ENCODE measurements at regions of chr21 and their contacts with region 1.

Region 1: DNA sequence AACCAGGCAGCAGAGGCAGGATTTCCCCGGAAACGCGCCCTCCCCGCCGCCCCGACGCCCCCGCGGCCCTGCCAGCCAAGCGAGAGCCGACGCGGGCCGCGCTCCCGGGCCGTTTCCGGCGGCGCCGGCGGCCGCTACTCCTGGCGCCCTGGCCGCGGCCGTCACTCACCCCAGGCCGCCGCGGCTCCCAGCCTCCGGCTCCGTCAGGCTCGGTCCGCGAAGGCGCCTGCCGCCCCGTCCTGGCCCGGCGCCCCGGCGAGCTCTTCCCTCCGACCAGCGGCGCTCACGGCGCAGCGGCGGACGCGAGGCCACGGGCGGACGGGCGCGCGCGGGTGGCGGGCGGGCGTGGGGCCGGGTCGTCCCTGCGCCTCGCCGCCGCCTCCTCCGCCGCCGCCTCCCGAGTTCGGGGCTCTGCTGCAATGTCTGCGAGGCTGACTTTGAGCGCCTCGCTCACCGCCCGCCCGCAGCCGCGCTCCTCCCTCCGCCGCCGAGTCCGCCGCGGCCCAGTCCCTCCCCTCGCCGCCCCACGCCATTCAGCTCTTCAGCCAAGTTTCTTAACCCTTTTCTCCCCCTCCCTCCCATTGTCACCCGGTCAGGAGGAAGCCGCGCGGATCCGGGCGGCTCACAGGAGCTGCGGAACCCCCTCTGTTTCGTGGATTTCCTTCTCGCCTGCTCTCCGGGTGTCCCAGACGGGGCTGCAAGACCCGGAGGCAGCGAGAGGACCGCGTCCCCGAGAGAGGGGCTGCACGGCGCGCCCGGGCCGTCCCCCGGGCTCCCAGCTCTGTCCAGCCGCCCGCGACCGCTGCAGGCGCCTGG is at the start of gene NRIP1:
- DNase-seq: peak; percentile 78
- ATAC-seq: peak; percentile 92
- H3K4me3 ChIP-seq: peak within 1 kb of the TSS; percentile 83 to 95 (median 92)
- H3K27ac ChIP-seq: peak within 1 kb of the TSS; percentile 95
- H3K4me1 ChIP-seq: peaks cover 45% of the 10 kb centered on the region
- H3K27me3 ChIP-seq: peaks cover 0 to 4% of the 10 kb centered on the region in 2 experiments; a peak in 1 of 5 replicates
- CTCF ChIP-seq: no peak
- EP300 ChIP-seq: 0 out of 4 replicates have a peak, but pooled peaks of 1 of the 2 experiments have one; percentile 11
- POLR2A ChIP-seq: peak; percentile 28 to 75; a peak in 3 of 4 replicates
- RAD21 ChIP-seq: peak; percentile 33
- total RNA-seq, gene NRIP1: 69.0 and 99.0 TPM in 2 replicates

Region 2: GRCh38 chr21:15037095-15037899 is 27.5 kb before region 1 on chr21:
- CTCF ChIA-PET with region 1: no interaction called
- POLR2A ChIA-PET with region 1: no interaction called
- in situ Hi-C with region 1: no loop called
- intact Hi-C with region 1: no loop called
- DNase-seq: no peak
- ATAC-seq: no peak
- H3K4me3 ChIP-seq: no peak overlapping the region
- H3K27ac ChIP-seq: no peak overlapping the region
- H3K4me1 ChIP-seq: peaks cover 10% of the 10 kb centered on the region
- H3K27me3 ChIP-seq: no peaks in the 10 kb centered on the region
- CTCF ChIP-seq: no peak
- EP300 ChIP-seq: no peak
- POLR2A ChIP-seq: no peak
- RAD21 ChIP-seq: no peak

Region 3: DNA sequence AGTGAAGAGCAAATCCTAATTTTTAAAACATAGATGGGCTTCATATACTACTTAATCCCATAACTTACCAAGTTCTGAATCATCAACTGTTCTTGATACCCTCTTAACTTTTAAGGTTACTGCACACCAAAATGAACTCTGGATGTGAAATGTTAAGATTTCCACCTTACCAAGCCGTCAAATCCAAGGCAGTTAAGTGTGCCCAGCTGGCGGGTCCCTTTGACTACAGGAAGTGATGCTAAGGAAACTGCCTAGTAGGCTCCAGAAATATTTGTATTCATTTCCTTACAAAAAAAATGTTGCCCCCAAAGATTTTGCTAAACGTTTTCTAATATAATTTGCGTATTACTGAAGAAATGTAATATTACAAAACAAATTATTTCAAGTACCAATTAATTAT is 10.7 kb before region 1 on chr21:
- CTCF ChIA-PET with region 1: no interaction called
- POLR2A ChIA-PET with region 1: interaction called, 11 read pairs
- in situ Hi-C with region 1: no loop called
- intact Hi-C with region 1: no loop called
- DNase-seq: no peak
- ATAC-seq: no peak
- H3K4me3 ChIP-seq: no peak overlapping the region
- H3K27ac ChIP-seq: no peak overlapping the region
- H3K4me1 ChIP-seq: peaks cover 91% of the 10 kb centered on the region
- H3K27me3 ChIP-seq: no peaks in the 10 kb centered on the region; a peak in 1 of 5 replicates
- CTCF ChIP-seq: no peak
- EP300 ChIP-seq: no peak
- POLR2A ChIP-seq: no peak
- RAD21 ChIP-seq: no peak

Region 4: GRCh38 chr21:15210235-15210739 is 145.5 kb after region 1 on chr21:
- CTCF ChIA-PET with region 1: no interaction called
- POLR2A ChIA-PET with region 1: interaction called, 8 read pairs
- in situ Hi-C with region 1: loop called (anchors 10 kb)
- intact Hi-C with region 1: loop called (anchors 1 kb)
- DNase-seq: peak; percentile 92
- ATAC-seq: peak; percentile 95
- H3K4me3 ChIP-seq: peak overlapping the region in 2 of 3 experiments; percentile 35 to 46; a peak in 3 of 6 replicates
- H3K27ac ChIP-seq: peak overlapping the region; percentile 91
- H3K4me1 ChIP-seq: peaks cover 78% of the 10 kb centered on the region
- H3K27me3 ChIP-seq: no peaks in the 10 kb centered on the region
- CTCF ChIP-seq: peak; percentile 78
- EP300 ChIP-seq: peak; percentile 54 to 94; a peak in 3 of 4 replicates
- POLR2A ChIP-seq: peak; percentile 34 to 38; a peak in 2 of 4 replicates
- RAD21 ChIP-seq: peak; percentile 56; the same call in 1 of the 2 replicates

Region 5: DNA sequence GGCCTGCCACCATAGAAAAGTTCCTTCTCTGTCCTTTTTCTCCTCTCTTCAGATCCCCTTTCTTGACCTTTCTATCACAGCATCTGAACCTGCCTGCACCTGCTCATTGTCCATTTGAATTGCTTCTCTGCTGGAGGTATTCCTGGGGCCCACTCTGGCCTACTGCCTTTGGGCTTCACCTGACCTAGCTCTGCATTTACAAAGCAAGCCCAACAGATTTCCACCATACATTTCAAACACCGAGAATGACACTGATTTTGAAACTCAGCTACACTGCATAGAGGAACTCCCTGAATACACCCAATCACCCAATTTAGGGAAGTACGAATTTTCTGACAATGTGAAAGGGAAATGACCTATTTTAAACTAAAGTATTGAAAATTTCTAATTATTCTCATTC is 380.5 kb after region 1 on chr21:
- CTCF ChIA-PET with region 1: no interaction called
- POLR2A ChIA-PET with region 1: interaction called, 10 read pairs
- in situ Hi-C with region 1: no loop called
- intact Hi-C with region 1: loop called (anchors 1 kb)
- DNase-seq: no peak
- ATAC-seq: no peak
- H3K4me3 ChIP-seq: no peak overlapping the region
- H3K27ac ChIP-seq: peak overlapping the region; percentile 93
- H3K4me1 ChIP-seq: peaks cover 61% of the 10 kb centered on the region
- H3K27me3 ChIP-seq: no peaks in the 10 kb centered on the region
- CTCF ChIP-seq: no peak
- EP300 ChIP-seq: no peak
- POLR2A ChIP-seq: no peak
- RAD21 ChIP-seq: no peak

Measured in HepG2 (cell line).